Prostate gland (tissue), 2 donors: ENCODE measurements at regions of chr2 and their contacts with region 1.

Region 1: DNA sequence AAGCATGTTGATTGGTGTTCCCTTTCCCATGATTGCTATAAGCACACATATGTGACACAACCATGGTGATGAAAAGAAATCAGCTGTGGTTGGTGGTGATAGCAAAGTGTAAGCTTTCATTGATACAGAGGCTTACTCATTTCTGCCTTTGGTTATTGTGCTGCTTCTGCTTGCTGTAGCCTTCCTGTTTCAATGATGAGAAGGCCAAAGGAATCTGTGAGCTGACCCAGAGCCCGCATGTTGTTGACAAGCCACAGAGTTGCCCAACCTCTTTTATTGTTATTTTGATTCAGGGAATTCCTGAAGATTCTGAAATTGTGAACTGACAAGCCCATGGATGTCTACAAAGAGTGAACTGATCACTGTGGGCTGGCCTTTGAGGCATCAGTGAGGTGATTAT is 164.4 kb downstream of the TMEFF2 start:
- DNase-seq: no peak
- H3K4me3 ChIP-seq: no peak overlapping the region
- H3K27ac ChIP-seq: no peak overlapping the region
- H3K4me1 ChIP-seq: no peaks in the 10 kb centered on the region
- H3K27me3 ChIP-seq: no peaks in the 10 kb centered on the region
- CTCF ChIP-seq: no peak
- POLR2A ChIP-seq: no peak

Region 2: DNA sequence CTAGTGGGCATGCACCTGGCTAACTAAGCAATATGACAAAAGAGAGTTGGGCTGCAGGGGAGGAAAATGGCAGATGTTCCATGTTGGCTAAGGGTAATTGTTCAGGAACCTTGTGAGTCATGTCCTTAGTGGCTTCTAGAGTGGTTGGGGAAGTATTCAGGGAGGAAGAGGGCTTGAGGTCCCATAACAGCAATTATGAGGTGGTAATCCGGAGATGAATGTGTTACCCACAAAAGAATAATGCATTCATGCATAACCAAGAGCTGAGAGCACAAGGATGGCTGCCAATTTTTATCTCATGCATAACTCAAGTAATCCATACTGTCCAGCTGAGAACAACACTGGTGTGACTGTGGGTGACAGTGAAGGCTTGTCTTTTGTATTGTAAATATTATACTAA is 121.6 kb after region 1 on chr2:
- intact Hi-C with region 1: loop called (anchors 5 kb)
- DNase-seq: no peak
- H3K4me3 ChIP-seq: no peak overlapping the region
- H3K27ac ChIP-seq: no peak overlapping the region
- H3K4me1 ChIP-seq: no peaks in the 10 kb centered on the region
- H3K27me3 ChIP-seq: no peaks in the 10 kb centered on the region
- CTCF ChIP-seq: no peak
- POLR2A ChIP-seq: no peak

Region 3: GRCh38 chr2:192165842-192166241 is 135.6 kb after region 1 on chr2:
- intact Hi-C with region 1: no loop called
- DNase-seq: no peak
- H3K4me3 ChIP-seq: no peak overlapping the region
- H3K27ac ChIP-seq: no peak overlapping the region
- H3K4me1 ChIP-seq: no peaks in the 10 kb centered on the region
- H3K27me3 ChIP-seq: no peaks in the 10 kb centered on the region
- CTCF ChIP-seq: no peak
- POLR2A ChIP-seq: no peak

Region 4: GRCh38 chr2:192327576-192327975 is 297.3 kb after region 1 on chr2:
- intact Hi-C with region 1: no loop called
- DNase-seq: no peak
- H3K4me3 ChIP-seq: no peak overlapping the region
- H3K27ac ChIP-seq: no peak overlapping the region
- H3K4me1 ChIP-seq: no peaks in the 10 kb centered on the region
- H3K27me3 ChIP-seq: no peaks in the 10 kb centered on the region
- CTCF ChIP-seq: no peak
- POLR2A ChIP-seq: no peak